Activated CD4-positive, alpha-beta T cell treated with anti-CD3 and anti-CD28 coated beads for 36 hours (primary cell): ENCODE measurements at regions of chr6 and their contacts with region 1.

Region 1: GRCh38 chr6:138428944-138429598 is 25.0 kb downstream of the HEBP2 start:
- DNase-seq: no peak
- ATAC-seq: peak; percentile 39
- H3K4me3 Mint-ChIP-seq: no peak overlapping the region
- H3K27ac Mint-ChIP-seq: no peak overlapping the region
- H3K4me1 Mint-ChIP-seq: no peaks in the 10 kb centered on the region
- H3K27me3 Mint-ChIP-seq: no peaks in the 10 kb centered on the region

Region 2: DNA sequence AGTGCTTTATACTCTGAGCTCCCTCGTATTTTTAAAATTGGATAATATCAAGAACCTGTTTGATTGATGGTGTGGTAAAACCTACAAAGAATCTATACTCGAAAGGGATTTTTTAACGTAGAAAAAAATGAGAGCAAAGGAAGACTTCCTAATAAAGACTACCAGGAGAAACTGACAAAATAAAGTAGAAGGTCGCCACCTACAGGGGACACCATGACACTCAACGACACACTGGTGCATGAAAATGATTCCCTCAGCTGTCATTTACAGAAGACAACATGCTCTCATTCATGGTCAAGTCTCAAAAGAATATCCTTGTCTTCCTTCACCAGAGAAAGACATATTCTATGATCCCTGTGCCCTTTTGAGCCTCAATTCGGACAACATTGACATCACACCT is 80.3 kb after region 1 on chr6:
- CTCF ChIA-PET with region 1: interaction called, 38 read pairs
- POLR2A ChIA-PET with region 1: no interaction called
- intact Hi-C with region 1: loop called (anchors 1 to 2 kb)
- DNase-seq: peak; percentile 66
- ATAC-seq: peak; percentile 60
- H3K4me3 Mint-ChIP-seq: no peak overlapping the region
- H3K27ac Mint-ChIP-seq: no peak overlapping the region
- H3K4me1 Mint-ChIP-seq: peaks cover 2% of the 10 kb centered on the region
- H3K27me3 Mint-ChIP-seq: no peaks in the 10 kb centered on the region

Region 3: DNA sequence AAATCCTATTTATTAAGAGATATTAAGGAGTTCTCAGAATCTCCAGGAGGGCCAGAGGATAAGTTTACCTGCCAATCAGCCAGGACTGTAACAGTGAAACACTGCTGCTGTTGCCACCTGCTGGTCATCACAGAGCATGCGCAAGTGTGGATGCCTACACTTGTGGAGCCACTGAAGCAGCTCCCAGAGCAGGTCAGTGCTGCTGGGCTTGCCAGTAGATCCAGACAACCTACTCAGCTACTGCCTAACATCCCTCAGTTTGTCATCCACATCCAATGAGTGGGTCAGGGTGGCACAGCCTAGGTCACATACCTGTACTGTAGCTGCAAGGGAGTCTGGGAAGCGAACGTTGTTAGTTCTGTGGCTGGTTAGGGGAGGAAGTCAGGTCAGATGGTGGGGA is 88.6 kb after region 1 on chr6:
- CTCF ChIA-PET with region 1: interaction called, 16 read pairs
- POLR2A ChIA-PET with region 1: no interaction called
- intact Hi-C with region 1: loop called (anchors 1 kb)
- DNase-seq: peak; percentile 72
- ATAC-seq: peak; percentile 86
- H3K4me3 Mint-ChIP-seq: no peak overlapping the region
- H3K27ac Mint-ChIP-seq: no peak overlapping the region
- H3K4me1 Mint-ChIP-seq: peaks cover 9% of the 10 kb centered on the region
- H3K27me3 Mint-ChIP-seq: no peaks in the 10 kb centered on the region

Region 4: GRCh38 chr6:138692058-138692977 is 263.2 kb after region 1 on chr6:
- CTCF ChIA-PET with region 1: no interaction called
- POLR2A ChIA-PET with region 1: no interaction called
- intact Hi-C with region 1: loop called in 1 of 2 experiments (anchors 5 kb)
- DNase-seq: peak; percentile 74
- ATAC-seq: peak; percentile 63
- H3K4me3 Mint-ChIP-seq: peak overlapping the region; percentile 68
- H3K27ac Mint-ChIP-seq: no peak overlapping the region
- H3K4me1 Mint-ChIP-seq: peaks cover 10% of the 10 kb centered on the region
- H3K27me3 Mint-ChIP-seq: peaks cover 29% of the 10 kb centered on the region

Region 5: DNA sequence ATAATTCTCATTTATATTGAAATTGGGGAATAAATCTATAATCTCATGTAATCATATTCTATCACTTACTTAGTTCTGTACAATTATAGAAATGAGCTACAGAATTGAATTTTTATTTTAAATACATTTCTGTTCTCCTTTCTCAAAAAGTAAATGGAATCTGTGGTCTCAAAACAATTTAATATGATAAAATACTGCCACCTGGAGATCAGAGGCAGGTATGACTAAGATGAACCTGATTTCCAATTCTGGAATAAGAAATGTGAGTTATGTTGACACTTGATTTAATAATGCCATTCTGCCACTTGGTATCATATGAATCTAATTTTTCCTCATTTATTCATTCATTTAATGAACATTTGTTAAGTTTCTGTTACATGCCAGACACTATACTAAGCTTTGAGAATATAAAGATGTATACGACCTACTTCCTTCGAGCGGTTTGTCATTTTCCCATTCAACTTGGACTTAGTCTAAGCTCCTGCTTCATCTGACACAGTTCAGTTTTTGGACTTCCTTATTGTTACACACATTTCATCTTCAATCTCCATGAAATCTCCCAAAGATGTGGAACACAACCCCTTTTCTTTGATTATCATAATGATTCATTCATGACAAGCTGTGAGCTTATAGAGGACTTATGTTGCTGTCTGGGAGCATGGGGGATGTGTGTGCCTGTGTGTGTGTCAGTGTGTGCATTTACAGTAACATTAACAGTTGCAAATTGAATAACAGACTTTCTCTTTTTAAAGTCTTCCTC is 337.0 kb after region 1 on chr6:
- CTCF ChIA-PET with region 1: interaction called, 5 read pairs
- POLR2A ChIA-PET with region 1: no interaction called
- intact Hi-C with region 1: loop called (anchors 1 to 5 kb)
- DNase-seq: no peak
- ATAC-seq: no peak
- H3K4me3 Mint-ChIP-seq: no peak overlapping the region
- H3K27ac Mint-ChIP-seq: no peak overlapping the region
- H3K4me1 Mint-ChIP-seq: peaks cover 14% of the 10 kb centered on the region
- H3K27me3 Mint-ChIP-seq: no peaks in the 10 kb centered on the region

Region 6: DNA sequence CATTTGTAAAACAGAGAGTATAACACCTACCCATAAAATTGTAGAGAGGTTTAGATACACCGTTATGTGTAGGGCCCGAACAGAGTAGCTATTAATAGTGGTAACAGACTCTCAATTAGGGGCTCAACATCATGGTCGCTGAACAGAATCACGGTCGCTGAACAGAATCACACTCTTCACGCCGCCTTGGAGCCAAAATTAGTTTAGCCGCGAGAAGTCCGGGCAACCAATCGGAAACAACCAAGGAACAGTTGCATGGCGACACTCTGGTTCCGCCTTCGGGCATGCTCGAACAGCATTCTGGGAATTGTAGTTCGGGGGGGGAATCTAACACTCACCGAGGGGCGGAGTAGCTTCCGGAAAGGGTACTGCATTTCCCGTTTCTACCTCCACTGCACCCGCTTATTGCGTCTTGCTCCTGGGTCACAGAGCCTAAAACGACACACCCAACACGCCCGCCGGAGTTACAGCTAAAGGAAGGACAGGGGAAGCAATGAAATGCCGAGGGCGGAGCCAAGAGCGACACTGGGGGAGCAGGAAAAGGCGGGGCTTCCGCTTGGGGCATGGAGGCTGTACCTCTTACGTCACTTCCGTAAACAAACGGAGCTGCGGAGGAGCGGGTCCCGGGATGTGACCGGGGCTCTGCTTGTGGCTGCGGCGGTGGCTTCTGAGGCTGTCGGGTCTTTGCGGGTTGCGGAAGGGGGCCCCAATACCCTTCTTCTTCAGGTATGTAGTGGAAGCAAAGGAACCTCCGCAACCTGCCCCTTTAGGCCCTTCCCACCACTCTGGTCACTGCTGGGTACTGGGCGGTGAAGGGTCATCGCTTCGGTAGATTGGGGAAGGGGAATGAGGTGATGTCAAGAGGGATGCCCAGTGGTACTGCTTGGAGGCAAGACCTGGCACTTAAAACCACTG is 344.4 kb after region 1 on chr6 and contains the start of gene CCDC28A:
- CTCF ChIA-PET with region 1: no interaction called
- POLR2A ChIA-PET with region 1: no interaction called
- intact Hi-C with region 1: loop called in 1 of 2 experiments (anchors 5 kb)
- DNase-seq: peak; percentile 95
- ATAC-seq: peak; percentile 91
- H3K4me3 Mint-ChIP-seq: peak within 1 kb of the TSS; percentile 84
- H3K27ac Mint-ChIP-seq: peak within 1 kb of the TSS; percentile 98
- H3K4me1 Mint-ChIP-seq: peaks cover 31% of the 10 kb centered on the region
- H3K27me3 Mint-ChIP-seq: no peaks in the 10 kb centered on the region
- total RNA-seq, gene CCDC28A: 14.8 to 16.8 TPM